ENCODE measurements at regions of chr4 and their contacts with region 1.

Region 1: GRCh38 chr4:40325189-40326019 is 9.7 kb upstream of the CHRNA9 start:
- DNase-seq: peak; percentile 77
- ATAC-seq: peak; percentile 98
- H3K4me3 Mint-ChIP-seq: no peak overlapping the region
- H3K27ac Mint-ChIP-seq: peak overlapping the region; percentile 36
- H3K4me1 Mint-ChIP-seq: peaks cover 35% of the 10 kb centered on the region
- H3K27me3 Mint-ChIP-seq: peaks cover 3% of the 10 kb centered on the region
- CTCF ChIP-seq: peak; percentile 94

Region 2: GRCh38 chr4:39697740-39698423 is 627.5 kb before region 1 on chr4 and contains the start of gene UBE2K:
- CTCF ChIA-PET with region 1: no interaction called
- POLR2A ChIA-PET with region 1: no interaction called
- intact Hi-C with region 1: no loop called
- DNase-seq: peak; percentile 87
- ATAC-seq: peak; percentile 84
- H3K4me3 Mint-ChIP-seq: peak within 1 kb of the TSS; percentile 92
- H3K27ac Mint-ChIP-seq: peak within 1 kb of the TSS; percentile 98
- H3K4me1 Mint-ChIP-seq: peaks cover 27% of the 10 kb centered on the region
- H3K27me3 Mint-ChIP-seq: no peaks in the 10 kb centered on the region
- CTCF ChIP-seq: no peak
- total RNA-seq, gene UBE2K: 69.5 to 77.1 TPM

Region 3: GRCh38 chr4:40149960-40150385 is 175.4 kb before region 1 on chr4:
- CTCF ChIA-PET with region 1: interaction called, 38 read pairs
- POLR2A ChIA-PET with region 1: no interaction called
- intact Hi-C with region 1: no loop called
- DNase-seq: peak; percentile 83
- ATAC-seq: peak; percentile 98
- H3K4me3 Mint-ChIP-seq: no peak overlapping the region
- H3K27ac Mint-ChIP-seq: peak overlapping the region; percentile 68
- H3K4me1 Mint-ChIP-seq: peaks cover 41% of the 10 kb centered on the region
- H3K27me3 Mint-ChIP-seq: no peaks in the 10 kb centered on the region
- CTCF ChIP-seq: peak; percentile 95

Region 4: DNA sequence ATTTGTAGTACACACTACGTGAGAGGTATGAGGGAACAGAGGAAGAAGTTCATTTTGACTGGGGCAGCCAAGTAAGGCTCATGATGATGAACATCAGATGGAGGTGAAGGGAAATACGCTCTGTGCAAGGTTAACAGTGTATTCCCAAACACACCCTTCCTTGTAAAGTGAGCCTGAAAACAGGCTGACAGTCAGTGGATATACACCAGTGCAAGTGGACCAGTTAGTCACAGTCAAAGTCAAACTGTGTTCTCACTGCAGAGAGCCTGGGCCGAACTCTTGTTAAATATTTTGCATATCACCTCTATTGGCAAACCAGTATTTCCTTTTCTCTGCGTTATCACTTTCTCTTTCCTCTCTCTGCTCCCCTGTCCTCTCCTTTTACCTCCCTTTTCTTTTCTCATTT is 151.9 kb before region 1 on chr4:
- CTCF ChIA-PET with region 1: no interaction called
- POLR2A ChIA-PET with region 1: no interaction called
- intact Hi-C with region 1: no loop called
- DNase-seq: no peak
- ATAC-seq: peak; percentile 77
- H3K4me3 Mint-ChIP-seq: peak overlapping the region; percentile 41
- H3K27ac Mint-ChIP-seq: peak overlapping the region; percentile 70
- H3K4me1 Mint-ChIP-seq: peaks cover 12% of the 10 kb centered on the region
- H3K27me3 Mint-ChIP-seq: no peaks in the 10 kb centered on the region
- CTCF ChIP-seq: no peak

Region 5: GRCh38 chr4:40193016-40193571 is 132.3 kb before region 1 on chr4:
- CTCF ChIA-PET with region 1: interaction called, 13 read pairs
- POLR2A ChIA-PET with region 1: interaction called, 326 read pairs
- intact Hi-C with region 1: no loop called
- DNase-seq: peak; percentile 50
- ATAC-seq: peak; percentile 13
- H3K4me3 Mint-ChIP-seq: peak overlapping the region; percentile 99
- H3K27ac Mint-ChIP-seq: peak overlapping the region; percentile 99
- H3K4me1 Mint-ChIP-seq: peaks cover 57% of the 10 kb centered on the region
- H3K27me3 Mint-ChIP-seq: no peaks in the 10 kb centered on the region
- CTCF ChIP-seq: no peak

Region 6: DNA sequence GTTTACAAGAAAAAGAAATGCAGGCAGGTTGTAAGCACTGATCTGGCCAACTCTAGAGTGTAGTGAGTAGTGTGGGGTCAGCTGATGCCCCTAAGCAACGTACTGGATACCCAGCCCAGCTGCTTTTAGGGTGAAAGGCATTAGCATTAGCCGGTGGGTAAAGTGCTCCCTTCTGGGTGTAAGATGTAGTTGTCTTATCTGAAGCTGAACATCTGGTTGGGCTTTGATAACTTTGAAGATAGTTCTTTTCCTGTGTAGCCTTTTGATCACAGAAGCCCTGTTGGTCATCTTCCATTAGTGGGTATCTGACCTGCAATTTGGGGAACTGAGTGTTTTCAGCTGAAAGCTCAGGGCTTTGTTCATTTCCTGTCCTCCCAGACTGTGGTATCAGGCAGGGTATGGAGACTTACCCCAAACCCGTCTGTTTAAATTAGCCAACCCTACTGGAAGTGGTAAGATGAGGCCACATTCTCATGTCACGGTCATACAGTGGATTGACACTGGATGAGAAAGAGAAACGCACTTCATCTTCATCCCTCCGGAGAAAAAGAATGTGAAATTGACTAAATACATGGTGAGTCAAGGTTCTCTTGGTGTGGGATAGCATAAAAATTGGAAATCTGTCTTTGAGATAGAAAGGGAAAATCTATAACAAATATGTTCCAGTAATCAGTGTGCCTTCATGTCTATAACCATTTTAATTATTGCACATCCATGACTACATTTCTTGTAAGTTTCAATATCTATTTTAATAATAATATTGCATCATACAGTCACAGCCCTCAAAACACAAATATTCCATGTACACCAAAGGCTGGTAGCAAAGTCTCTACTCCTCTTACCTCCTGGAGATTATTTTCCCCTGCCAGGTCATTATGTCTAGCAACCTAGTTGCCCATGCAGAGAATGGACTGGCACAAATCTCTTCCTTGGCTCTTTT is 119.9 kb before region 1 on chr4:
- CTCF ChIA-PET with region 1: interaction called, 12 read pairs
- POLR2A ChIA-PET with region 1: interaction called, 326 read pairs
- intact Hi-C with region 1: no loop called
- DNase-seq: peak; percentile 65
- ATAC-seq: peak; percentile 52
- H3K4me3 Mint-ChIP-seq: peak overlapping the region; percentile 99
- H3K27ac Mint-ChIP-seq: peak overlapping the region; percentile 99
- H3K4me1 Mint-ChIP-seq: peaks cover 35% of the 10 kb centered on the region
- H3K27me3 Mint-ChIP-seq: no peaks in the 10 kb centered on the region
- CTCF ChIP-seq: no peak

Region 7: GRCh38 chr4:40335508-40335860 is 10.1 kb after region 1 on chr4:
- CTCF ChIA-PET with region 1: interaction called, 34 read pairs
- POLR2A ChIA-PET with region 1: interaction called, 3 read pairs
- intact Hi-C with region 1: no loop called
- DNase-seq: no peak
- ATAC-seq: no peak
- H3K4me3 Mint-ChIP-seq: no peak overlapping the region
- H3K27ac Mint-ChIP-seq: no peak overlapping the region
- H3K4me1 Mint-ChIP-seq: peaks cover 4% of the 10 kb centered on the region
- H3K27me3 Mint-ChIP-seq: peaks cover 2% of the 10 kb centered on the region
- CTCF ChIP-seq: no peak